ENCODE measurements at regions of chr1 and their contacts with region 1.

Region 1: GRCh38 chr1:39183503-39184353 is 20.8 kb upstream of the MACF1 start:
- DNase-seq: peak; percentile 38 to 94 (median 87)
- ATAC-seq: peak; percentile 97
- H3K4me3 ChIP-seq: no peak overlapping the region
- H3K4me3 Mint-ChIP-seq: peak overlapping the region in 8 of 10 donors; percentile 8 to 51 (median 39)
- H3K27ac ChIP-seq: peak overlapping the region; percentile 76
- H3K27ac Mint-ChIP-seq: peak overlapping the region; percentile 88 to 98 (median 97)
- H3K4me1 ChIP-seq: peaks cover 7 to 16% of the 10 kb centered on the region in 2 donors
- H3K4me1 Mint-ChIP-seq: peaks cover 19 to 50% (median 35%) of the 10 kb centered on the region in 7 donors
- H3K27me3 ChIP-seq: no peaks in the 10 kb centered on the region
- H3K27me3 Mint-ChIP-seq: no peaks in the 10 kb centered on the region

Region 2: DNA sequence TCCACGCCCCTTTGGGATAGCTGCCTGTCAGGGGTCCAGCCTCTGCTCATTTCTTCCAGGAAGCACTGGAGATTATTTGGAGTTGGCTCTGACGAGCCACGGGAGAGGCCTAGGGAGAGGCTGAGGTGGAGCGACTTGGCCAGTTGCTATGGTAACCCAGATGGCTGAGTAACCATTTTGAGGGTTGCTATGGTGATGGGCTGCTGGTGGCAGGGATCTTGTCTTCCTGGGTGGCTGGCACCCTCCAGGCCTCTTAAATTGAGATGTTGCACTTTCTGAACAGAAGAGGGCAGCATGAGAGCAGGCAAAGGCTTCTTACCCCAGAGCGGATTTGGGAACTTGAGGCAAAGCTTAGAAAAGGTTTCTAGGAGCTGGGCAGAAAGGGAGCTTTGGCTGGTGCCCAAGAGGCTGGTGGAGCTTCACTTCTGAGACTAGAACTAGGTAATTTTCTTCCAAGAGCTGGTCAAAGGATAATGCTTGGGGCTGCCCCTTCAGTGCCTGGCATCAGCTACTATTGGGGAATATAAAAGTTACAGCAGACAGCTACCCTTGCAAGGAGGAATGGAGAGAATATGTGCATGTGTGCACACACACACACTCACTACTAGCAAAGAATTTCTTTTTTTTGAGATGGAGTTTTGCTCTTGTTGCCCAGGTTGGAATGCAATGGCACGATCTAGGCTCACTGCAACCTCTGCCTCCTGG is 85.0 kb before region 1 on chr1:
- CTCF ChIA-PET with region 1: interaction called, 9 read pairs
- POLR2A ChIA-PET with region 1: interaction called, 3 read pairs
- intact Hi-C with region 1: loop called in 1 of 2 experiments (anchors 2 kb)
- DNase-seq: peak in 8 of 9 donors; percentile 42 to 75 (median 69)
- ATAC-seq: peak; percentile 89
- H3K4me3 ChIP-seq: no peak overlapping the region
- H3K4me3 Mint-ChIP-seq: no peak overlapping the region
- H3K27ac ChIP-seq: no peak overlapping the region
- H3K27ac Mint-ChIP-seq: peak overlapping the region in 5 of 9 donors; percentile 5 to 65 (median 9)
- H3K4me1 ChIP-seq: peaks cover 3 to 10% of the 10 kb centered on the region in 2 donors
- H3K4me1 Mint-ChIP-seq: peaks cover 22 to 24% (median 23%) of the 10 kb centered on the region in 7 donors
- H3K27me3 ChIP-seq: no peaks in the 10 kb centered on the region
- H3K27me3 Mint-ChIP-seq: peaks cover 0 to 3% (median 0%) of the 10 kb centered on the region in 5 donors

Region 3: GRCh38 chr1:39105061-39105840 is 78.5 kb before region 1 on chr1:
- CTCF ChIA-PET with region 1: interaction called, 3 read pairs
- POLR2A ChIA-PET with region 1: interaction called, 3 read pairs
- intact Hi-C with region 1: loop called (anchors 2 kb)
- DNase-seq: peak; percentile 34 to 76 (median 50)
- ATAC-seq: peak; percentile 83
- H3K4me3 ChIP-seq: peak overlapping the region; percentile 64
- H3K4me3 Mint-ChIP-seq: peak overlapping the region in 6 of 10 donors; percentile 50 to 88 (median 72)
- H3K27ac ChIP-seq: peak overlapping the region; percentile 0
- H3K27ac Mint-ChIP-seq: no peak overlapping the region
- H3K4me1 ChIP-seq: peaks cover 8 to 14% of the 10 kb centered on the region in 2 donors
- H3K4me1 Mint-ChIP-seq: peaks cover 22 to 38% (median 34%) of the 10 kb centered on the region in 7 donors
- H3K27me3 ChIP-seq: no peaks in the 10 kb centered on the region
- H3K27me3 Mint-ChIP-seq: peaks cover 0 to 10% (median 3%) of the 10 kb centered on the region in 5 donors

Region 4: DNA sequence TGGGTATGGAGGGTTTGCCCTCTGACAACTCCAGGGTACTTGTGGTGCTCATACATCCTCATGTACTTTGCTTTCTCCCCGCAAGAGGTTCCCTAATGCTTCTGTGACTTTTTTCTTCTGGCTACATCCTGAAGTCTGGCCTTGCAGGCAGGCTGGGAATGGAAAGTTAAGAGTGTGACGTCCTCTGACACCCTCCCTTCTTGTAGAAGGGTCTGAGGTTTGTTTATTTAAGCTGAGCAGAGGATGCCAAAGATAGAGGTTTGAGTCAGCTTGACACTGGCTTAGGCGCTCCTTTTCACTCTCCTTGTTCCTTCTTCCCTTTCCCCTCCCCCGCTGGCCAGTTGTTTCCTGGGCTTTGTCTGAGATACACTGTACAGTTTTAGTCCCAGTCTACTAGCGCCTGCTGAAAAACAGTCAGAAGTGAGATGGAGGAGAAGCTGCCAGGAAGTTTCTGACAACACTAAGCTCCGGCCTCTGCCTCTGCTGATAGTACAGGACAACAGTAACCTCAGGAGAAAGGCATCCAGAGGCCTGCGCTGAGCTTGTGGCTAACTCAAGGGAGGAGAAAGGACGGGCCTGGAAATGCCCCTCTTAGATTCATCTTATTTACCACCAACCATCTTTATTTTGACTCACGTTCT is 20.8 kb after region 1 on chr1 and contains the start of gene MACF1:
- CTCF ChIA-PET with region 1: interaction called, 4 read pairs
- POLR2A ChIA-PET with region 1: interaction called, 5 read pairs
- intact Hi-C with region 1: loop called in 1 of 2 experiments (anchors 1 kb)
- DNase-seq: peak in 2 of 9 donors; percentile 49 to 68
- ATAC-seq: peak; percentile 39
- H3K4me3 ChIP-seq: peak within 1 kb of the TSS; percentile 61
- H3K4me3 Mint-ChIP-seq: peak within 1 kb of the TSS; percentile 83 to 99 (median 88)
- H3K27ac ChIP-seq: peak within 1 kb of the TSS; percentile 66
- H3K27ac Mint-ChIP-seq: peak within 1 kb of the TSS; percentile 82 to 98 (median 92)
- H3K4me1 ChIP-seq: peaks cover 19 to 23% of the 10 kb centered on the region in 2 donors
- H3K4me1 Mint-ChIP-seq: peaks cover 38 to 83% (median 74%) of the 10 kb centered on the region in 7 donors
- H3K27me3 ChIP-seq: no peaks in the 10 kb centered on the region
- H3K27me3 Mint-ChIP-seq: no peaks in the 10 kb centered on the region
- total RNA-seq, gene MACF1: 282 to 409 (median 335) TPM

Region 5: DNA sequence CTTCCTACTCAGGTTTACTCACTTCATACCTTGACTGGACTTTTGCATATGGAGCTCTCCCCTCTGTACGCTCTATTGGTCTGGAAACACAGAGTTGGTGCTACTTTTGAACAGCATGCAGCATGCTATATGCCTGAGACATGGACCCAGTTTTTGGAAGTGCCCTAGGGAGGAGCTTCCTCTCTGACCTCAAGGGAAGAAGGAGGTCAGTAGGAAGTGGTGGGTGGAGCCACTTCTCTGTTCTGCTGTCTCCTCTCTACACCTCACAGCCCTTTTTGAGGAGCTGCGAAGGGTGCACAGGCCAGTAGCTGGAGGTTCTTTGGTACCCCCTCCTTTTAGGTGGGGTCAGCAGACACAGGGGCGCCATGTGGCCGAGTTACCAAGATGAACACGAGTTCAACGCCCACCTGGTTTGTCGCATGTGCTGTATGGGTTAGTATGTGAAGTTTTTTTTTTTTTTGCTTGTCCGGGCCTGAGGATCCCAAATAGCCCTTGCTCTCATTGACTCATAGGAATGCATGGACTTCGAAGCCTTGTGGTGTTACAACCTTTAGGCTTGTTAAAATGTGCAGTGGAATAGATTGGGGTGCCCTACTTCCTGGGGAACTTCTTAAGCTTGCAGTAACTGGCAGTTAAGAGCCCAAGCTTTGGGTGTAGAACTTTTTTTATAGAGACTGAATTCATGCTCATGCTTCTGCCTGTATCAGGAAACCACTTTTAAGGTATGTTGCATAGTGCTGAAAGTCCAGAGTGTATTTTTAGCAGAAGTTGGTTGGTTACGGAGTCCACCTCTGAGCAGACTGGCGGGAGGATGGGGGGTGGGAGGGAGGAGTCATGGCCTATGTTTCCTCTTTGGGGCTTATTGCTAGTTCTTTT is 31.5 kb after region 1 on chr1:
- CTCF ChIA-PET with region 1: interaction called, 5 read pairs
- POLR2A ChIA-PET with region 1: interaction called, 4 read pairs
- intact Hi-C with region 1: loop called in 1 of 2 experiments (anchors 5 kb)
- DNase-seq: peak in 4 of 9 donors; percentile 37 to 48 (median 46)
- ATAC-seq: peak; percentile 84
- H3K4me3 ChIP-seq: peak overlapping the region; percentile 64
- H3K4me3 Mint-ChIP-seq: peak overlapping the region; percentile 88 to 98 (median 94)
- H3K27ac ChIP-seq: peak overlapping the region; percentile 75
- H3K27ac Mint-ChIP-seq: peak overlapping the region; percentile 84 to 97 (median 92)
- H3K4me1 ChIP-seq: peaks cover 22 to 23% of the 10 kb centered on the region in 2 donors
- H3K4me1 Mint-ChIP-seq: peaks cover 38 to 67% (median 54%) of the 10 kb centered on the region in 7 donors
- H3K27me3 ChIP-seq: no peaks in the 10 kb centered on the region
- H3K27me3 Mint-ChIP-seq: no peaks in the 10 kb centered on the region

Region 6: GRCh38 chr1:39538588-39539465 is 355.1 kb after region 1 on chr1:
- CTCF ChIA-PET with region 1: no interaction called
- POLR2A ChIA-PET with region 1: no interaction called
- intact Hi-C with region 1: loop called in 1 of 2 experiments (anchors 5 kb)
- DNase-seq: peak in 7 of 9 donors; percentile 14 to 43 (median 39)
- ATAC-seq: peak; percentile 77
- H3K4me3 ChIP-seq: no peak overlapping the region
- H3K4me3 Mint-ChIP-seq: no peak overlapping the region
- H3K27ac ChIP-seq: no peak overlapping the region
- H3K27ac Mint-ChIP-seq: peak overlapping the region in 2 of 9 donors; percentile 26 to 30
- H3K4me1 ChIP-seq: no peaks in the 10 kb centered on the region
- H3K4me1 Mint-ChIP-seq: peaks cover 0 to 10% (median 0%) of the 10 kb centered on the region in 7 donors
- H3K27me3 ChIP-seq: no peaks in the 10 kb centered on the region
- H3K27me3 Mint-ChIP-seq: no peaks in the 10 kb centered on the region

Measured in naive thymus-derived CD4-positive, alpha-beta T cell (primary cell).